ENCODE measurements at regions of chr7 and their contacts with region 1.

Region 1: DNA sequence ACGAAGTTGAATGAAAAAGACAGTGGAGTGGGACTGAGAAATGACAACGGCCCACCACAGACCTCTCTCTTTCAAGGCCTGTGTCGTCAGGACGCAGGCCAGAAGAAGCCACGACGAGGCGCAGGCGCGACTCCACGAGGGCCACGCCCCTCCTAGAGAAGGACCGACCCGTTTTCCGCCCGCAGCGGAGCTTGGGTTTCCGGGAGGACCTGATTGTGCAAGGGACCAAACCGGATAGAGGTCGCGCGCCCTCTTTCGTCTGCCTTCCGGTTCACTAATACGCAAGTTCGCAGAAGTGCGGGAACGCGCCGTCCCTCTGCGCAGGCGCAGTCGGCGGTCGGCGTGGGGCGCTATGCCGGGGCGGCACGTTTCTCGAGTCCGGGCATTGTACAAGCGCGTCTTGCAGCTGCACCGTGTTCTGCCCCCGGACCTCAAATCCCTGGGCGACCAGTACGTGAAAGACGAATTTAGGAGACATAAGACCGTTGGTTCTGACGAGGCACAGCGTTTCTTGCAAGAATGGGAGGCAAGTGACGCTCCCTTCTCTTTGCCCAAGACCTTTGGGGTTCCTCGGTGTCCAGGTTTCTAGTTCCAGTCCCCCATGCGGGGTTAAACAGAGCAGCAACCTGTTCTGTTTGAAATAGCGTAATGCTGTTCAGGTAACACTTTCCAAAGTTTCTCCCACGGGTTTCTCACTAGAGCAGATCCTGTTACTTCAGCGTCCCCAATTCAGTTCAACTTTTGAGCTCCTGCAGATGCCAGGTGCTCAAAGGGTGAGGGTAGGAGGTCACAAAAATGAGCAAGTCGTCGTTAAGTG is at the start of gene SDHAF3:
- DNase-seq: peak; percentile 99
- H3K4me3 Mint-ChIP-seq: peak within 1 kb of the TSS; percentile 89
- H3K27ac Mint-ChIP-seq: peak within 1 kb of the TSS; percentile 92
- H3K4me1 Mint-ChIP-seq: peaks cover 39% of the 10 kb centered on the region
- H3K27me3 Mint-ChIP-seq: no peaks in the 10 kb centered on the region
- total RNA-seq, gene SDHAF3: 30.7 to 36.3 TPM

Region 2: DNA sequence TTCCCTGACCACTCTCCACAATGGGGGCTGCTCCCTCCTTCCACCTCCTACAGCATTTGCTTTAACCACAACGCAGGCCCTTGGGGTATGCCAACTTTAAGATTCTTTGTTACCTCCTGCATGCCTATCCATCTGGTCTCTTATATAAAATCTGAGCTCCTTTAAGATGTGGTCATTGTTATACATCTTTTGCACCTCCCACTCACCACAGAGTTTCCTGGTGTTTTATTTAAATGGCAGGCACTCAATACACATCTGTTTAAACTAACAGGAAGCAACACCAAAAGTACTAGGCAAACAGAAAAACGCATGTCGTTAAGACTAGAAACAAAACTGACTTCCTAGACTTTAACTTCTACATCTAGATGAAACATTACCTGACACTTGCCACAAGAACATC is 832.0 kb before region 1 on chr7:
- CTCF ChIA-PET with region 1: no interaction called
- intact Hi-C with region 1: loop called (anchors 1 kb)
- DNase-seq: peak; percentile 39
- H3K4me3 Mint-ChIP-seq: no peak overlapping the region
- H3K27ac Mint-ChIP-seq: peak overlapping the region; percentile 79
- H3K4me1 Mint-ChIP-seq: peaks cover 38% of the 10 kb centered on the region
- H3K27me3 Mint-ChIP-seq: no peaks in the 10 kb centered on the region

Region 3: DNA sequence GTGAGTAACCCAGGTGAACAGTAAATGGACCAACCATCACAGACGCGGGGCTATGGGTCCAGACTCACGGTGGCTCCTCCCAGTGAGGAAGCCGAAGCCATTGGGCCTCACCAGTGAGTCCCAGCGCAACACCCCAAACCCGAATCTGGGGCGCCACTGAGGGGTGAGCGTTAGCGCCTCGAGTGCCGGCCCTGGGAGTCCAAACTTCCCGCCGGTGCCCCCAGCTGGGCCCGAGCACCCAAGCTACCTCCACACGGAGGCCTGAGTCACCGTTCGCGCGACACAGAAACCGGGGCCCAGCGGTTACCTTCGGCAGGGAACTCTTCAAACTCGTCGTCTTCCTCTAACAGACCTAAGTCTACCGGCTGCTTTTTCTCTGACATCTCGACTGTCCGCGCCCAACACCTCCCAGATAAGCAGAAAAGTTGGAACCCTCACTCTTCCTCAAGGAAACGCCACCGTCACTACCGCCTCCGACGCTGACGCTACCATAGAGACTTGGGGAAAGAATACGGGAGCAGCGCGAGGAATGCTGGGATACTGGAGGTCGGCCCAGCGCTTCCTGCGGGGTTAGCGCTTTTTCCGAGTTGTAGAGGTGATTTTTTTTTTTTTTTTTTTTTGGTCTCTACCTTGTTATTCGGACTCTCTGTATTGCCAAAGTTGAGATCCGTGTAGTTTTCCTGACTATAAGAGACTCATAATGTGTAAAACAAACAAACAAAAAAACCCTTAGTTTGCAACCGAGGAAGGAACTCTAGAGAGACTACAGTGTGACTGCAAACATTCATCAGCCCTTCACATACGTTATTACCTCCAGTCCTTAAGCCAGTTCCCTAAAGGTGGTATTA is 408.0 kb before region 1 on chr7 and contains the start of gene SEM1:
- CTCF ChIA-PET with region 1: no interaction called
- intact Hi-C with region 1: loop called (anchors 2 kb)
- DNase-seq: peak; percentile 77
- H3K4me3 Mint-ChIP-seq: peak within 1 kb of the TSS; percentile 92
- H3K27ac Mint-ChIP-seq: peak within 1 kb of the TSS; percentile 93
- H3K4me1 Mint-ChIP-seq: peaks cover 27% of the 10 kb centered on the region
- H3K27me3 Mint-ChIP-seq: peaks cover 4% of the 10 kb centered on the region
- total RNA-seq, gene SEM1: 37.7 to 47.5 TPM

Region 4: GRCh38 chr7:97179454-97180104 is 62.0 kb after region 1 on chr7:
- CTCF ChIA-PET with region 1: interaction called, 4 read pairs
- intact Hi-C with region 1: loop called (anchors 2 kb)
- DNase-seq: peak; percentile 66
- H3K4me3 Mint-ChIP-seq: no peak overlapping the region
- H3K27ac Mint-ChIP-seq: no peak overlapping the region
- H3K4me1 Mint-ChIP-seq: peaks cover 3% of the 10 kb centered on the region
- H3K27me3 Mint-ChIP-seq: no peaks in the 10 kb centered on the region

Region 5: DNA sequence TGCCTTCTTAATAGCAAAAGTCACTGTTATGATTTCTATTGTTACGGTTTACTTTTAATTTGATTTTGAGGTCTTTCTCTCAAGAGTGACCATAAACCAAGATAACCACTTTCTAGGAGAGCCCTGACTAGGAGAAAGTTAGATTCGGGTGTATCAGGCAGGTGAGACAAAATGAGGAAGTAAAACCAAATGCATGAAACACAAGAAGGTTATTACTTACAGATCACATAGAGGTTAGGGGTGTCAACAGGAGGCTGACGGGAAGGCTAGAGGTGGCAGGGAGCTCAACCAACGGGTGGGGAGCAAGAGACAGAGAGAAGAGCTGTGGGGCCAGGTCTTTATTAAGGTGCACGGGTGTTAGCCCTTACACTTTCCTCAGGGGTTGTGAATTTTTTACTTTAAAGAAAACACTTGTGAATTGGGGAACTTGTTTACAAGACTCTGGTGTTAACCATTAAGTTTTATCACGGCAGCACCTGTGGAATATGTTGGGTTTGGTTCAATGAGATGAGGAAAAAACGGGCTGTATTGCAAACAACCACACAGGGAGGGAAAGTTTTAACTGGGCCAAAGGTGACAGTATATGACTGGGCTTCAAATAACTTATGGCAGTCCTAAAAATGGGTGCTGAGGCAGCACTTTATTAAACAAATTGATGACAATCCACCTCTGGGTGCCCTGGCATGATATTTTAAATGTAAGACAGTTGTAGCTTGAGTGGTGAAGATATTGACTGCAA is 154.8 kb after region 1 on chr7:
- CTCF ChIA-PET with region 1: no interaction called
- intact Hi-C with region 1: no loop called
- DNase-seq: no peak
- H3K4me3 Mint-ChIP-seq: no peak overlapping the region
- H3K27ac Mint-ChIP-seq: no peak overlapping the region
- H3K4me1 Mint-ChIP-seq: no peaks in the 10 kb centered on the region
- H3K27me3 Mint-ChIP-seq: peaks cover 5% of the 10 kb centered on the region

Region 6: GRCh38 chr7:97971990-97972943 is 854.7 kb after region 1 on chr7:
- CTCF ChIA-PET with region 1: no interaction called
- intact Hi-C with region 1: loop called (anchors 1 kb)
- DNase-seq: peak; percentile 91
- H3K4me3 Mint-ChIP-seq: peak overlapping the region; percentile 94
- H3K27ac Mint-ChIP-seq: peak overlapping the region; percentile 95
- H3K4me1 Mint-ChIP-seq: peaks cover 27% of the 10 kb centered on the region
- H3K27me3 Mint-ChIP-seq: no peaks in the 10 kb centered on the region

Region 7: GRCh38 chr7:98251841-98252639 is 1134.5 kb after region 1 on chr7 and contains the start of gene TECPR1:
- CTCF ChIA-PET with region 1: no interaction called
- intact Hi-C with region 1: loop called (anchors 5 kb)
- DNase-seq: peak; percentile 90
- H3K4me3 Mint-ChIP-seq: peak within 1 kb of the TSS; percentile 93
- H3K27ac Mint-ChIP-seq: peak within 1 kb of the TSS; percentile 94
- H3K4me1 Mint-ChIP-seq: peaks cover 53% of the 10 kb centered on the region
- H3K27me3 Mint-ChIP-seq: no peaks in the 10 kb centered on the region
- total RNA-seq, gene TECPR1: 29.8 to 36.7 TPM